Naive thymus-derived CD4-positive, alpha-beta T cell (primary cell): ENCODE measurements at regions of chr2 and their contacts with region 1.

Region 1: GRCh38 chr2:160970052-160970965 is 189.9 kb upstream of the TANK start:
- DNase-seq: peak in 5 of 9 donors; percentile 14 to 38 (median 27)
- ATAC-seq: peak; percentile 36
- H3K4me3 ChIP-seq: no peak overlapping the region
- H3K4me3 Mint-ChIP-seq: peak overlapping the region in 1 of 10 donors; percentile 27
- H3K27ac ChIP-seq: no peak overlapping the region
- H3K27ac Mint-ChIP-seq: no peak overlapping the region
- H3K4me1 ChIP-seq: no peaks in the 10 kb centered on the region
- H3K4me1 Mint-ChIP-seq: peaks cover 0 to 4% (median 0%) of the 10 kb centered on the region in 7 donors
- H3K27me3 ChIP-seq: peaks cover 0 to 3% of the 10 kb centered on the region in 2 donors
- H3K27me3 Mint-ChIP-seq: peaks cover 0 to 26% (median 0%) of the 10 kb centered on the region in 5 donors

Region 2: GRCh38 chr2:160109936-160110673 is 860.2 kb before region 1 on chr2:
- CTCF ChIA-PET with region 1: interaction called, 3 read pairs
- POLR2A ChIA-PET with region 1: no interaction called
- intact Hi-C with region 1: loop called in 1 of 2 experiments (anchors 1 kb)
- DNase-seq: peak in 7 of 9 donors; percentile 34 to 74 (median 66)
- ATAC-seq: peak; percentile 85
- H3K4me3 ChIP-seq: no peak overlapping the region
- H3K4me3 Mint-ChIP-seq: no peak overlapping the region
- H3K27ac ChIP-seq: no peak overlapping the region
- H3K27ac Mint-ChIP-seq: no peak overlapping the region
- H3K4me1 ChIP-seq: no peaks in the 10 kb centered on the region
- H3K4me1 Mint-ChIP-seq: no peaks in the 10 kb centered on the region
- H3K27me3 ChIP-seq: no peaks in the 10 kb centered on the region
- H3K27me3 Mint-ChIP-seq: peaks cover 0 to 24% (median 8%) of the 10 kb centered on the region in 5 donors

Region 3: GRCh38 chr2:160252278-160252887 is 717.9 kb before region 1 on chr2:
- CTCF ChIA-PET with region 1: interaction called, 9 read pairs
- POLR2A ChIA-PET with region 1: no interaction called
- intact Hi-C with region 1: loop called (anchors 1 kb)
- DNase-seq: peak in 2 of 9 donors; percentile 14 to 18
- ATAC-seq: peak; percentile 57
- H3K4me3 ChIP-seq: no peak overlapping the region
- H3K4me3 Mint-ChIP-seq: no peak overlapping the region
- H3K27ac ChIP-seq: no peak overlapping the region
- H3K27ac Mint-ChIP-seq: peak overlapping the region in 1 of 9 donors; percentile 2
- H3K4me1 ChIP-seq: no peaks in the 10 kb centered on the region
- H3K4me1 Mint-ChIP-seq: peaks cover 0 to 5% (median 0%) of the 10 kb centered on the region in 7 donors
- H3K27me3 ChIP-seq: no peaks in the 10 kb centered on the region
- H3K27me3 Mint-ChIP-seq: peaks cover 4 to 18% (median 6%) of the 10 kb centered on the region in 5 donors

Region 4: DNA sequence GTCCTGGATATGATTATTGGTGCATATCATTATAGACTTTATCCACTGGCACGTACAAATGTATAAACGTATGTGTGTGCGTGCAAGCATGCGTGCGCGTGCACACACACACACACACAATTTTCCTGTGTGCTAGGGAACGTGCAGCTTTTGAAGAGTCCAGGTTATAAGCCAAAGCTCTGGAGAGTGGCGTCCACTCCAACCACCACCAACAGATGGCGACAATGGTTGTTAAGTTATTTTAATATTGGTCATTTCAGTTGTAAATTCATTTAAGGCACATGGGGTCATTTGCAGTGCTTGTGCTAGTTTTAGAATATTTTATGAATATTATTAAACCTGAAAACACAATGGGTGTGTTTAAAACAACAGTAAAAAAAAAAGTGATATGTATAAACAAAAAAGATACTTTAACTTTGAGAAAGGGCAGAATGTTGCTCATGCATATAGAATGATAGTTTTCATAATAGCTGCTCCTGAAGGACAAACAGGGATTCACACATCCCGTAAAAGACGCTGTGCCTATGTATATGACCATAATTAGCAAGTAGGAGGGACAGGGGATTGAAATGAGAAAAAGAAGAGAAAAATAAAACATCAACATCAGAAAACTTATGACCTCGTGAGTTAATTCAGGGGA is 646.0 kb before region 1 on chr2:
- CTCF ChIA-PET with region 1: interaction called, 16 read pairs
- POLR2A ChIA-PET with region 1: no interaction called
- intact Hi-C with region 1: loop called (anchors 1 to 5 kb)
- DNase-seq: peak in 5 of 9 donors; percentile 10 to 38 (median 21)
- ATAC-seq: peak; percentile 64
- H3K4me3 ChIP-seq: no peak overlapping the region
- H3K4me3 Mint-ChIP-seq: peak overlapping the region in 1 of 10 donors; percentile 40
- H3K27ac ChIP-seq: no peak overlapping the region
- H3K27ac Mint-ChIP-seq: peak overlapping the region in 3 of 9 donors; percentile 10 to 65 (median 32)
- H3K4me1 ChIP-seq: peaks cover 10 to 58% of the 10 kb centered on the region in 2 donors
- H3K4me1 Mint-ChIP-seq: peaks cover 61 to 98% (median 96%) of the 10 kb centered on the region in 7 donors
- H3K27me3 ChIP-seq: no peaks in the 10 kb centered on the region
- H3K27me3 Mint-ChIP-seq: no peaks in the 10 kb centered on the region

Region 5: DNA sequence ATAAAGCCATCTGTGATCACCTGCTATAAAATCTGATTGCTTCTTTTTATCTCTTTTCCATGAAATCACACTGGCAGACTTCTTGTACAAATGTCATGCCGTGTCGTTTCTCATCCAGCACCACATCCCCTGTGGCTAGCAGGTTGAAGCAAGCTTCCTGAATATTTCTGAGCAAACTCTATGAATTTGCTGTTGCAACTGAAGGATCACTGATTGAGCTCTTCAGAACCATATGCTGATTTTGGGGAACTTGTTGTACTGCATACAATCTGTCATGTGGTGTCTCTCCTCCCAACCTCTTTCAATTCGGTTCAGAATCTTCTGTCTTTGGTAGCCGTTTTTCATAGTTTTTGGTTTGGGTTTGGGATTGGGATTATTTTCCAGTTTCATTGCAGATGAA is 419.1 kb before region 1 on chr2:
- CTCF ChIA-PET with region 1: no interaction called
- POLR2A ChIA-PET with region 1: no interaction called
- intact Hi-C with region 1: loop called in 1 of 2 experiments (anchors 5 kb)
- DNase-seq: peak in 1 of 9 donors; percentile 6
- ATAC-seq: peak; percentile 60
- H3K4me3 ChIP-seq: no peak overlapping the region
- H3K4me3 Mint-ChIP-seq: peak overlapping the region in 8 of 10 donors; percentile 41 to 74 (median 60)
- H3K27ac ChIP-seq: no peak overlapping the region
- H3K27ac Mint-ChIP-seq: peak overlapping the region in 2 of 9 donors; percentile 4 to 10
- H3K4me1 ChIP-seq: no peaks in the 10 kb centered on the region
- H3K4me1 Mint-ChIP-seq: peaks cover 0 to 22% (median 8%) of the 10 kb centered on the region in 7 donors
- H3K27me3 ChIP-seq: no peaks in the 10 kb centered on the region
- H3K27me3 Mint-ChIP-seq: peaks cover 0 to 12% (median 0%) of the 10 kb centered on the region in 5 donors